ENCODE measurements at regions of chr17 and their contacts with region 1.

Region 1: GRCh38 chr17:3921502-3922319 is 5.4 kb upstream of the P2RX1 start:
- DNase-seq: no peak
- H3K4me3 ChIP-seq: peak overlapping the region in 1 of 4 donors; percentile 5
- H3K27ac ChIP-seq: peak overlapping the region in 3 of 4 donors; percentile 73 to 81 (median 77)
- H3K4me1 ChIP-seq: peaks cover 9 to 62% (median 13%) of the 10 kb centered on the region in 3 donors
- H3K27me3 ChIP-seq: no peaks in the 10 kb centered on the region
- CTCF ChIP-seq: no peak
- POLR2A ChIP-seq: peak in 1 of 4 donors; percentile 15

Region 2: GRCh38 chr17:4004517-4005295 is 83.0 kb after region 1 on chr17:
- intact Hi-C with region 1: loop called (anchors 5 kb)
- DNase-seq: no peak
- H3K4me3 ChIP-seq: no peak overlapping the region
- H3K27ac ChIP-seq: no peak overlapping the region
- H3K4me1 ChIP-seq: peaks cover 5 to 33% (median 7%) of the 10 kb centered on the region in 3 donors
- H3K27me3 ChIP-seq: peaks cover 0 to 17% (median 0%) of the 10 kb centered on the region in 4 donors
- CTCF ChIP-seq: peak; percentile 95 to 97 (median 96)
- POLR2A ChIP-seq: no peak

Measured in esophagus squamous epithelium (tissue), 5 donors.